Calu3 (cell line): ENCODE measurements at regions of chr7 and their contacts with region 1.

Region 1: GRCh38 chr7:22895140-22895827 is 72.6 kb upstream of the TOMM7 start:
- DNase-seq: no peak
- H3K4me3 Mint-ChIP-seq: no peak overlapping the region
- H3K27ac Mint-ChIP-seq: no peak overlapping the region
- H3K4me1 Mint-ChIP-seq: peaks cover 35% of the 10 kb centered on the region
- H3K27me3 Mint-ChIP-seq: no peaks in the 10 kb centered on the region
- CTCF ChIP-seq: no peak

Region 2: GRCh38 chr7:22969010-22969431 is 73.7 kb after region 1 on chr7:
- CTCF ChIA-PET with region 1: interaction called, 10 read pairs
- intact Hi-C with region 1: no loop called
- DNase-seq: no peak
- H3K4me3 Mint-ChIP-seq: no peak overlapping the region
- H3K27ac Mint-ChIP-seq: no peak overlapping the region
- H3K4me1 Mint-ChIP-seq: no peaks in the 10 kb centered on the region
- H3K27me3 Mint-ChIP-seq: no peaks in the 10 kb centered on the region
- CTCF ChIP-seq: no peak

Region 3: DNA sequence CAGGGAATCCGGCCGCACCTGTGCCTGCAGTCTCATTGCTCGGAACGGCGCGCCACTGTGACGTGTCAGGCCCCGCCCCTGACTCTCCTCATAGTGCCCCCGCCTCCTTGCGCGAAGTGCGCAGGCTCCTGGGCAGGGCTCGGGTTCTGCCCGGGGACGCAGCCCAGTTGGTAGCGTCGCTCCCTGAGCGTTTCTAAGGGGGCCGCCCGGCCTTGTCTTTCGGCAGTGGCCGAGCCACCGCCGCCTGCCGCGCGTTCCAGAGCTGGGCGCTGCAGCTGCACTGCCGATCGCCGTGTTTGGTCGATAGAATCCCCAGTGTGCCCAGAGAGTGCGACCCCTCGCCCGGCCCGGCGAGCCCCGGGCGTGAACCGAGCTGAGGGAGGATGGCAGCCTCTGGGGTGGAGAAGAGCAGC is 210.4 kb after region 1 on chr7 and contains the start of gene KLHL7:
- CTCF ChIA-PET with region 1: no interaction called
- intact Hi-C with region 1: no loop called
- DNase-seq: peak; percentile 99
- H3K4me3 Mint-ChIP-seq: peak within 1 kb of the TSS; percentile 99
- H3K27ac Mint-ChIP-seq: peak within 1 kb of the TSS; percentile 93
- H3K4me1 Mint-ChIP-seq: peaks cover 12% of the 10 kb centered on the region
- H3K27me3 Mint-ChIP-seq: peaks cover under 1% of the 10 kb centered on the region
- CTCF ChIP-seq: no peak
- total RNA-seq, gene KLHL7: 35.2 and 37.8 TPM in 2 replicates